ENCODE measurements at regions of chr6 and their contacts with region 1.

Region 1: GRCh38 chr6:75368151-75368779 is 83.7 kb upstream of the TMEM30A start:
- DNase-seq: no peak
- H3K4me3 ChIP-seq: no peak overlapping the region
- H3K27ac ChIP-seq: peak overlapping the region; percentile 43 to 68 (median 60)
- H3K4me1 ChIP-seq: peaks cover 25 to 37% (median 29%) of the 10 kb centered on the region in 4 donors
- H3K27me3 ChIP-seq: no peaks in the 10 kb centered on the region
- CTCF ChIP-seq: peak; percentile 57 to 62 (median 59)
- EP300 ChIP-seq: no peak
- POLR2A ChIP-seq: no peak

Region 2: DNA sequence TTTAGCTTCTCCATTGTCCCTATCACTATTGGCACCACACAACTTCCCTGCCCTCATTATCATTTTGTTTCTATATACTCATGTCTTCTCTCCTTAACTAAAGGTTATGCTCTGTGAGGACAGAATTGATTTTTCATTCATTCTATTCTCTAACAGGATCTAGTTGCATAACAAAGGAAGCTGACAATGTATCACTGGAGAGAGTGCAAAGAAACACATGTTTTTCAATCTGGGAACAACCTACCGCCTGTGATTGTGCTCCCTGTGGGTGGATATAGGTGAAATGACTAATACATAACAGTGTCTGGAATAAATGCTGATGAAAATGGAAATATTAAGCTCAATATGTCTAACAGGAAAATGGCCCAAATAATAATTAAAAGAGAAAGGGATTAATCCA is 219.0 kb before region 1 on chr6:
- intact Hi-C with region 1: no loop called
- DNase-seq: no peak
- H3K4me3 ChIP-seq: no peak overlapping the region
- H3K27ac ChIP-seq: peak overlapping the region in 2 of 4 donors; percentile 5 to 37
- H3K4me1 ChIP-seq: peaks cover 0 to 32% (median 21%) of the 10 kb centered on the region in 4 donors
- H3K27me3 ChIP-seq: no peaks in the 10 kb centered on the region
- CTCF ChIP-seq: no peak
- EP300 ChIP-seq: no peak
- POLR2A ChIP-seq: no peak

Region 3: GRCh38 chr6:75230484-75231325 is 137.6 kb before region 1 on chr6:
- intact Hi-C with region 1: no loop called
- DNase-seq: no peak
- H3K4me3 ChIP-seq: peak overlapping the region in 3 of 4 donors; percentile 19 to 28 (median 26)
- H3K27ac ChIP-seq: no peak overlapping the region
- H3K4me1 ChIP-seq: peaks cover 3 to 16% (median 12%) of the 10 kb centered on the region in 4 donors
- H3K27me3 ChIP-seq: no peaks in the 10 kb centered on the region
- CTCF ChIP-seq: peak; percentile 65 to 77 (median 66)
- EP300 ChIP-seq: no peak
- POLR2A ChIP-seq: no peak

Region 4: GRCh38 chr6:75296811-75297779 is 71.2 kb before region 1 on chr6:
- intact Hi-C with region 1: loop called (anchors 5 kb)
- DNase-seq: no peak
- H3K4me3 ChIP-seq: no peak overlapping the region
- H3K27ac ChIP-seq: no peak overlapping the region
- H3K4me1 ChIP-seq: peaks cover 13 to 23% (median 17%) of the 10 kb centered on the region in 4 donors
- H3K27me3 ChIP-seq: no peaks in the 10 kb centered on the region
- CTCF ChIP-seq: peak; percentile 68 to 70 (median 70)
- EP300 ChIP-seq: no peak
- POLR2A ChIP-seq: no peak

Region 5: DNA sequence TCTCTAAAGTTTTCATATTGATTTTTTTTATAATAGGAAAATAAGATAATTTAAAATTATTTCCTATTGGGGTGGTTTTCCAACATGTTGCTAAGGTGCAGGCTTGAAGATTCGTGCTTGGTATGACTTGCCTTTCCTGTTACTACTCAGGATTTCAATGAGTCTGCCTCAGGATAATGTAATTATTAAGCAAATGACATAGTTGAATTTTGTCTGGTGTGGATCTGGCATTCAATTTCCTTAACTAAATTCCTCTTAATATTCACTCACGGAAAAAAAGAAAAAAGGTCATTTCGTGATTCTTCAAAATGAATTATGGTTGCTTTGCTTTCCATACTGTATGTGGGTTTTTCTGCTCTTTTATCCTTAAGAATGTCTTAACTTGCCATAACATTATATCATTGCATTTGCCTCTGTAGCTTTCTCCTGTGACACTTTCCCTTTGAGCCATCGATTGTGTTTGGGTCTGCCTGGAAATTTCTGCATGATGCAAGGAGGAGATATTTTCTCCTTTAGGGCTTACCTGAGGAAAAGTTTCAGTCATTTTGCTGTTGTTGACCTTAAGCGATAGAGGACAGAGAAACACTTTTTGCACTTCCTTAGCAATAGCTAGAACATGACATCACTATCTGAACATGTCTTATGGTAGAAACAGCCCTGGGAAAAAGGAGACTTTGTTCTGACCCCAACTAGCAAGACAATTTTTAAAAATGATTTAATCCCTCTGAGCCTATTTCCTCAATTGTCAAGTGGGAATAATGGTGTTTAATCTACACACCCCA is 134.8 kb after region 1 on chr6:
- intact Hi-C with region 1: loop called (anchors 2 kb)
- DNase-seq: no peak
- H3K4me3 ChIP-seq: no peak overlapping the region
- H3K27ac ChIP-seq: no peak overlapping the region
- H3K4me1 ChIP-seq: peaks cover 0 to 10% (median 7%) of the 10 kb centered on the region in 4 donors
- H3K27me3 ChIP-seq: no peaks in the 10 kb centered on the region
- CTCF ChIP-seq: no peak
- EP300 ChIP-seq: no peak
- POLR2A ChIP-seq: no peak